Caco-2 (cell line): ENCODE measurements at regions of chr16 and their contacts with region 1.

Region 1: GRCh38 chr16:47141773-47142485 is 1.8 kb downstream of the NETO2 start:
- DNase-seq: peak; percentile 87 to 88
- H3K4me3 ChIP-seq: peak overlapping the region; percentile 79
- H3K4me3 Mint-ChIP-seq: peak overlapping the region; percentile 79
- H3K27ac Mint-ChIP-seq: no peak overlapping the region
- H3K4me1 ChIP-seq: no peaks in the 10 kb centered on the region
- H3K4me1 Mint-ChIP-seq: peaks cover 22% of the 10 kb centered on the region
- H3K27me3 ChIP-seq: no peaks in the 10 kb centered on the region
- H3K27me3 Mint-ChIP-seq: no peaks in the 10 kb centered on the region
- CTCF ChIP-seq: peak; percentile 73 to 96

Region 2: GRCh38 chr16:46947900-46948547 is 193.9 kb before region 1 on chr16:
- CTCF ChIA-PET with region 1: no interaction called
- POLR2A ChIA-PET with region 1: no interaction called
- intact Hi-C with region 1: loop called (anchors 1 kb)
- DNase-seq: peak in 1 of 2 experiments; percentile 61
- H3K4me3 ChIP-seq: no peak overlapping the region
- H3K4me3 Mint-ChIP-seq: no peak overlapping the region
- H3K27ac Mint-ChIP-seq: no peak overlapping the region
- H3K4me1 ChIP-seq: peaks cover 14% of the 10 kb centered on the region
- H3K4me1 Mint-ChIP-seq: no peaks in the 10 kb centered on the region
- H3K27me3 ChIP-seq: no peaks in the 10 kb centered on the region
- H3K27me3 Mint-ChIP-seq: no peaks in the 10 kb centered on the region
- CTCF ChIP-seq: peak; percentile 59 to 67

Region 3: GRCh38 chr16:47180073-47180472 is 38.1 kb after region 1 on chr16:
- CTCF ChIA-PET with region 1: no interaction called
- POLR2A ChIA-PET with region 1: no interaction called
- intact Hi-C with region 1: no loop called
- DNase-seq: no peak
- H3K4me3 ChIP-seq: no peak overlapping the region
- H3K4me3 Mint-ChIP-seq: no peak overlapping the region
- H3K27ac Mint-ChIP-seq: no peak overlapping the region
- H3K4me1 ChIP-seq: no peaks in the 10 kb centered on the region
- H3K4me1 Mint-ChIP-seq: no peaks in the 10 kb centered on the region
- H3K27me3 ChIP-seq: no peaks in the 10 kb centered on the region
- H3K27me3 Mint-ChIP-seq: no peaks in the 10 kb centered on the region
- CTCF ChIP-seq: no peak

Region 4: DNA sequence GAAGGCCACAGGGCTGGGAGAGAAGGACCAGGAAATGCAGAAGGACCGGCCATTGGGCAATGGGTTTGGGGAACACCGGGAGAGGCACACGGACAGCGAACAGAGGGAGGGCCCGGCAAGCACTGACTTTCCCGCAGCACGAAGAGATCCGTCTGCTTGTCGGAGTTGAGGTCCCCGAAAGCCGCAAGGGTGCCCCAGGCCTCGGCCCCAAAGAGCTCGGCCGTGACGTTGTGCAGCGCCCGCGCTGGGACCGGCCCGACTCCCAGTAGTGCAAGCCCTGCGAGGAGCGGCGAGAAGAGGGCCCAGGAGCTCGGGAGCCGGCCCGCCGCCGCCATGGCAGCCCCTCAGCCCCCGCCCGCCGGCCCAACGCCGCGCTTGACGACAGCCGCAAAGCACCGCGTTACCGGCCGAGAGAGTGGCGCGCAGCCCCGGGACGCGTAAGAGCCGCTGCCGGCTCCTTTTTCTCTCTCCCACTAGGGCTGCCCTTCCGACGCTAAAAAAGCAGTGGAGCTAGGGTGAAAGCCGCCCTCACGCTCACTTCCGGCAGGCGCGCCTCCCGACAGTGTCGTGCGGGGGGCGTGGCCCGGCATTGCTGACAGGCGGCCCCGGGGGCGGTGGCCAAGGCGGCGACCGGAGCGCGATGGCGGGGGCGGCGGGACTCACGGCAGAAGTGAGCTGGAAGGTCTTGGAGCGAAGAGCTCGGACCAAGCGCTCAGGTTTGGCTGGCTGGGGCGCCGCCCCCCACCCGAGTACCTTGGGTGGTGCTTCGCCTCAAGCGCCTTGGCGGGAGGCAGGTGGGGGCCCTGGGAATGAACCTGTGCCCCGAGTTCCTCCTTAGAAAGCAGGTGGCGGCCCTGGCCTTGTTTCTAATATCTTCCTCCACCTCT is 319.0 kb after region 1 on chr16 and contains the starts of genes ITFG1 and PHKB:
- CTCF ChIA-PET with region 1: interaction called, 4 read pairs
- POLR2A ChIA-PET with region 1: no interaction called
- intact Hi-C with region 1: loop called (anchors 2 kb)
- DNase-seq: peak; percentile 93 to 94
- H3K4me3 ChIP-seq: peak within 1 kb of the TSS; percentile 79
- H3K4me3 Mint-ChIP-seq: peak within 1 kb of the TSS; percentile 97
- H3K27ac Mint-ChIP-seq: peak within 1 kb of the TSS; percentile 99
- H3K4me1 ChIP-seq: peaks cover 13% of the 10 kb centered on the region; the same call in 1 of the 2 replicates
- H3K4me1 Mint-ChIP-seq: peaks cover 14% of the 10 kb centered on the region
- H3K27me3 ChIP-seq: no peaks in the 10 kb centered on the region
- H3K27me3 Mint-ChIP-seq: no peaks in the 10 kb centered on the region
- CTCF ChIP-seq: no peak
- total RNA-seq, gene ITFG1: 29.2 and 38.2 TPM in 2 replicates
- total RNA-seq, gene PHKB: 61.6 and 74.2 TPM in 2 replicates

Region 5: DNA sequence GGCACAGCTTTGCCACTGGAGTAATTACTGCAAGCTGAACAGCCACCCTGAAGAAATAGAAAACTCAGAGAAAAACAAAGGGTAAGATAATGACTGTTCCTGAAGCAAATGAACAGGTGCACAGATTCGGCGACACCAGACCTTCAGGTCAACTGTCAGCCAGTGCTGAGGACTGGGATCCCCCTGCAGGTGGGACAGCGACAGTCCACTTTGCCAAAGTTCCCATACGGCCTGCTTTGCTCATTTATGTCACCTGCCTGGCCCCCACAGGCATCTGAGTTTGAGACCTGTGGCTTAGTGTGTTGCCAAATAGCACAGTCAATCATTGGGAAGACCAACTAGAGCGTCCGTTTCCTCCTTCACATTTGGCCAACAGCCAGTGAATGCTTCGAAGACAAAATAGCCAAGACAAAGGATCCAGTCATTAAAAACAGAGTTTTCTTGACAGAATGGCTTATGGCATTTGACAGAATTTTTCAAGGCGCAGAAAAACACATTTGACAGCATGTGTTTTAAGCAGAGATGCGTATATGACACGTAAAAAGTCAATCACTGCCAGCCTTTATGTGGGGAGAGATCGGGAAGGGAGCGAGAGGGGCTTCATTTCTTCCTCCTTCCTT is 900.0 kb after region 1 on chr16:
- CTCF ChIA-PET with region 1: no interaction called
- POLR2A ChIA-PET with region 1: no interaction called
- intact Hi-C with region 1: loop called (anchors 1 kb)
- DNase-seq: peak; percentile 44 to 51
- H3K4me3 ChIP-seq: no peak overlapping the region
- H3K4me3 Mint-ChIP-seq: no peak overlapping the region
- H3K27ac Mint-ChIP-seq: no peak overlapping the region
- H3K4me1 ChIP-seq: no peaks in the 10 kb centered on the region
- H3K4me1 Mint-ChIP-seq: no peaks in the 10 kb centered on the region
- H3K27me3 ChIP-seq: no peaks in the 10 kb centered on the region
- H3K27me3 Mint-ChIP-seq: peaks cover 10% of the 10 kb centered on the region
- CTCF ChIP-seq: peak; percentile 53 to 62

Region 6: GRCh38 chr16:48156790-48157209 is 1014.9 kb after region 1 on chr16:
- CTCF ChIA-PET with region 1: no interaction called
- POLR2A ChIA-PET with region 1: no interaction called
- intact Hi-C with region 1: loop called (anchors 1 kb)
- DNase-seq: peak; percentile 73 to 86
- H3K4me3 ChIP-seq: no peak overlapping the region
- H3K4me3 Mint-ChIP-seq: no peak overlapping the region
- H3K27ac Mint-ChIP-seq: no peak overlapping the region
- H3K4me1 ChIP-seq: no peaks in the 10 kb centered on the region
- H3K4me1 Mint-ChIP-seq: no peaks in the 10 kb centered on the region
- H3K27me3 ChIP-seq: no peaks in the 10 kb centered on the region
- H3K27me3 Mint-ChIP-seq: no peaks in the 10 kb centered on the region
- CTCF ChIP-seq: peak; percentile 87 to 90